ENCODE measurements at regions of chr5 and their contacts with region 1.

Region 1: GRCh38 chr5:150112261-150113046 is 26.1 kb upstream of the CSF1R start:
- DNase-seq: peak; percentile 88
- ATAC-seq: peak; percentile 71
- H3K4me3 ChIP-seq: no peak overlapping the region
- H3K27ac ChIP-seq: peak overlapping the region; percentile 8
- H3K4me1 ChIP-seq: peaks cover 25% of the 10 kb centered on the region
- H3K27me3 ChIP-seq: no peaks in the 10 kb centered on the region
- CTCF ChIP-seq: no peak
- POLR2A ChIP-seq: no peak
- RAD21 ChIP-seq: 0 out of 2 replicates have a peak, but pooled peaks have one; percentile 18

Region 2: GRCh38 chr5:150000256-150000989 is 112.0 kb before region 1 on chr5 and contains the starts of genes HMGXB3 and TIGD6:
- CTCF ChIA-PET with region 1: no interaction called
- POLR2A ChIA-PET with region 1: interaction called, 5 read pairs
- dilution Hi-C with region 1: no loop called
- in situ Hi-C with region 1: no loop called
- intact Hi-C with region 1: loop called (anchors 1 kb)
- DNase-seq: peak; percentile 95
- ATAC-seq: peak; percentile 88
- H3K4me3 ChIP-seq: peak within 1 kb of the TSS; percentile 62
- H3K27ac ChIP-seq: peak within 1 kb of the TSS; percentile 75
- H3K4me1 ChIP-seq: no peaks in the 10 kb centered on the region; the same call in 1 of the 2 replicates
- H3K27me3 ChIP-seq: no peaks in the 10 kb centered on the region
- CTCF ChIP-seq: no peak
- POLR2A ChIP-seq: peak; percentile 92
- RAD21 ChIP-seq: no peak; the same call in 1 of the 2 replicates
- total RNA-seq, gene HMGXB3: 27.6 and 29.2 TPM in 2 replicates
- total RNA-seq, gene TIGD6: 6.1 and 6.6 TPM in 2 replicates

Region 3: GRCh38 chr5:150036513-150036912 is 75.9 kb before region 1 on chr5:
- CTCF ChIA-PET with region 1: interaction called, 3 read pairs
- POLR2A ChIA-PET with region 1: no interaction called
- dilution Hi-C with region 1: no loop called
- in situ Hi-C with region 1: no loop called
- intact Hi-C with region 1: loop called (anchors 2 kb)
- DNase-seq: peak; percentile 99
- ATAC-seq: peak; percentile 98
- H3K4me3 ChIP-seq: no peak overlapping the region
- H3K27ac ChIP-seq: no peak overlapping the region
- H3K4me1 ChIP-seq: 0 out of 2 replicates have a peak, but pooled peaks cover 4% of the 10 kb centered on the region
- H3K27me3 ChIP-seq: no peaks in the 10 kb centered on the region
- CTCF ChIP-seq: no peak
- POLR2A ChIP-seq: no peak
- RAD21 ChIP-seq: peak; percentile 37

Region 4: DNA sequence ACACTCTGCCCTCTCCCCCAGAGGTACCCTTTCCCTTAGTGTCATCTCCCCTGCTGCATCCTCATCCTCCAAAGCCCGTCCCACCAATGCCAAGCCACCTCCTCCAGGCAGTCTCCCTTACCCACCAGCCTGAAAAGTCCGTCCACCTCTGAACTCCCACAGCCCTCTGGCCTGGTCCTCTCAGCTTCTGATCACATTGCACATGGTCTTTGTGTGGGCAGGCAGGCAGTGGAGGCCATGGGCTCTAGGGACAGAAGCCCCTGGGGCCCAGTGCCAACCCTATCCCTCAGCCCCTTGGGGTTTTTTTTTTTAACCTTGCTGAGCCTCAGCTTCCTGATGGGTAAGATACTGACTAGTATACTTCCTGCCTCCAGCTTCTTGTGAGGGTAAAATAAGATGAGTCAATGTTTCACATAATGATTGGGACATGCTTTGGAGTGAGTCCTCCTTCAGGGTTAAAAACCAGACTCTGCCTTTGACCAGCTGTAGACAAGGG is 45.5 kb before region 1 on chr5:
- CTCF ChIA-PET with region 1: interaction called, 3 read pairs
- POLR2A ChIA-PET with region 1: no interaction called
- dilution Hi-C with region 1: no loop called
- in situ Hi-C with region 1: no loop called
- intact Hi-C with region 1: loop called (anchors 5 kb)
- DNase-seq: peak; percentile 83
- ATAC-seq: peak; percentile 67
- H3K4me3 ChIP-seq: no peak overlapping the region
- H3K27ac ChIP-seq: peak overlapping the region; percentile 39; the same call in 1 of the 2 replicates
- H3K4me1 ChIP-seq: peaks cover 33% of the 10 kb centered on the region
- H3K27me3 ChIP-seq: no peaks in the 10 kb centered on the region
- CTCF ChIP-seq: no peak
- POLR2A ChIP-seq: no peak
- RAD21 ChIP-seq: no peak

Measured in IMR-90 (cell line).